Heart right ventricle (tissue), 16 donors: ENCODE measurements at regions of chr1 and their contacts with region 1.

Region 1: GRCh38 chr1:173122958-173123852 is 72.5 kb upstream of the TNFSF18 start:
- DNase-seq: peak; percentile 48 to 79
- ATAC-seq: peak; percentile 84 to 97 (median 94)
- H3K4me3 ChIP-seq: peak overlapping the region in 7 of 10 donors; percentile 9 to 44 (median 36)
- H3K27ac ChIP-seq: peak overlapping the region; percentile 48 to 90 (median 82)
- H3K4me1 ChIP-seq: peaks cover 0 to 24% (median 18%) of the 10 kb centered on the region in 9 donors
- H3K27me3 ChIP-seq: no peaks in the 10 kb centered on the region
- CTCF ChIP-seq: no peak

Region 2: GRCh38 chr1:173050865-173051264 is 72.3 kb before region 1 on chr1 and contains the start of gene TNFSF18:
- intact Hi-C with region 1: loop called in 1 of 10 experiments (anchors 10 kb)
- DNase-seq: peak in 1 of 2 donors; percentile 40
- ATAC-seq: peak in 7 of 8 donors; percentile 61 to 95 (median 79)
- H3K4me3 ChIP-seq: no peak within 1 kb of the TSS
- H3K27ac ChIP-seq: no peak within 1 kb of the TSS
- H3K4me1 ChIP-seq: peaks cover 0 to 45% (median 26%) of the 10 kb centered on the region in 9 donors
- H3K27me3 ChIP-seq: no peaks in the 10 kb centered on the region
- CTCF ChIP-seq: no peak
- total RNA-seq, gene TNFSF18: 0.13 to 1.4 (median 0.22) TPM in 4 of 10 donors, not detected in the others

Region 3: DNA sequence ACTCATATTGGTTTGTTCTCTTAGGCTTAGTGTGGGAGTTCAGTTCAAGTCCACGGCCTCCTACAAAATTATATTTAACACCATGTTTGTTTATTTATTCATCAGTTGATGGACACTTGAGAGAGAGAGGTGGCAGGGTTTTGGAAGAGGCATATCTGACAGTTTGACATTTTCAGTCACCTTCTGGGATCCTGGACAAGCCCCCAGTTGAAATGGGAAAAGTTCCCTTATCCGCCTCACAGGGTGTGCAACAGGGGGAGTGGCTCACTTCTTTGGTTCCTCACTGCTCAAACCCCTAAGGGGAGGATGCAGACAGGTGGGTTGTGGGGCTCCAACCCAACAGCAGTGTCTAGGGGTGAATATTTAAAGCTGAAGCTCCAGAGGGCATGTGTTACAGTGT is 20.2 kb before region 1 on chr1:
- intact Hi-C with region 1: no loop called
- DNase-seq: no peak
- ATAC-seq: no peak
- H3K4me3 ChIP-seq: no peak overlapping the region
- H3K27ac ChIP-seq: no peak overlapping the region
- H3K4me1 ChIP-seq: no peaks in the 10 kb centered on the region
- H3K27me3 ChIP-seq: no peaks in the 10 kb centered on the region
- CTCF ChIP-seq: no peak

Region 4: DNA sequence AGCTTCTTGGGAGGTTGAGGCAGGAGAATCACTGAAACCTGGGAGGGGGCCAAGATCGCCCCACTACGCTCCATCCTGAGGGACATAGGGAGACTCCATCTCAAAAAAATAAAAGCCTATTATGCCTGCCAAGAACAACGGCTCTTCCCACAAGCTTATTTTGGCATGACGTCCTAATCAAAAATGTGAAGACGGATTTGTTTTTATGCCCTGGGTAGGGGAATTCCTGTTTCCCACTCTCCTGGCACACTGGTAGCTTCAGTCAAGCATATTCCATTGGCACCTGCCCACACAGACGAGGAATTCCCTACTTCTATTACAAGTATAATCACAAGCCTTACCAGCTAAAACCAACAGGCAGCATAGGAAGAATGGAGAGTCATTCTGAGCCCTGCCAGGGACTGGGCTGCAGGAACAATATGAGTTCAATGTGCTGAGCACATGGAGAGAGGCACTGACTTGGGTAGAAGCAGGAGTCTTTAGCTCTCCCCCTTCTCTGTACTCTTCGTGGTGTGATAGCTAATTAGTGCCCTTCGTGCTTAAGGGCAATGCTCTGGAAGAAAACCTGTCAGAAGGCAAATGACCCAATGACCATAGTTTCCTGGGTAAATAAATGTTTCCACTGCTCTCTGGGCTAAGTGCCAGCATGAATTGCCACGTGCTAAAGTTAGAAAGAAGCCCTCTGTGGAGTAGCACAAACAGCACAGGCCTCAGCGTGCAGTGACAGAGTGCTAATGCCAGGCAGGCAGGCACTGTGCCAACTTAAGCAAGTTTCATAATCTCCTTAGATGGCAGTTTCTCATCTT is 67.1 kb after region 1 on chr1:
- intact Hi-C with region 1: loop called in 1 of 10 experiments (anchors 10 kb)
- DNase-seq: peak; percentile 66 to 88
- ATAC-seq: peak; percentile 85 to 98 (median 96)
- H3K4me3 ChIP-seq: no peak overlapping the region
- H3K27ac ChIP-seq: peak overlapping the region; percentile 16 to 86 (median 78)
- H3K4me1 ChIP-seq: peaks cover 0 to 35% (median 18%) of the 10 kb centered on the region in 9 donors
- H3K27me3 ChIP-seq: no peaks in the 10 kb centered on the region
- CTCF ChIP-seq: no peak

Region 5: DNA sequence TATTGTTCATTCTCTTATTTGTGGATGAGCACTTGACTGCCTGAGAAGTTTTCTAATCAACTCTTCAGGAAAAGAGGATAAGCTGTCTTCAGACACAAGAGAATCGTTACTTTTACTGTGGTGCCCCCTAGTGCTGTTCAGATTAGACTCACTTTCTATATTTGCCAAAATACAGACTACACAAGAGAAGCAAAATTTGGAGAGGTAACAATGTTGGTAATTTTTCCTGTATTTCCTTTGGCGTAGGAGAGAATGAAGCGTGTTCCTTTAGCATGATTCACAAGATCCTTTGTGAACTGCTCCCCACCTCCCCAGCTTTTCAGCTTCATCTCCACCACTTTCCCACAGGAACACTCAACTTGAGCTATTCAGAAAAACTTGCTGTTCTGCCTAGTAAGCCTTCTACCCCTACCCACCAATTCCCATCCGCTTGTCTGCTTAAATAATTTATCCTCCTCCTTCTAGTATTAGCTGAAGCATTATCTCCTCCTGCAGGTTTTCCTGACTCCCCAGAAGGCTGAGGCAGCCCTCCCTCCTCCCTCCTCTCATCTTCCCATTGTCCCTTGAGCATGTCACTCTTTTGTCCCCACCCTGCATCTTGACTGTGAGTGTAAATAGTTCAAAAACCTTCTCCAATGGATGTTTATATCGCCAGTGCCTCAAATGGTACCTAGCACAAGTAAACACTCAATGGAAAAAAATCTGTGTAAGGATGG is 79.4 kb after region 1 on chr1:
- intact Hi-C with region 1: loop called in 2 of 10 experiments (anchors 10 kb)
- DNase-seq: peak in 1 of 2 donors; percentile 56
- ATAC-seq: peak in 7 of 8 donors; percentile 66 to 79 (median 74)
- H3K4me3 ChIP-seq: no peak overlapping the region
- H3K27ac ChIP-seq: no peak overlapping the region
- H3K4me1 ChIP-seq: peaks cover 0 to 36% (median 12%) of the 10 kb centered on the region in 9 donors
- H3K27me3 ChIP-seq: no peaks in the 10 kb centered on the region
- CTCF ChIP-seq: peak; percentile 23 to 79 (median 69)